Panc1 (cell line): ENCODE measurements at regions of chr20 and their contacts with region 1.

Region 1: GRCh38 chr20:36967636-36968035 is 16.1 kb upstream of the SAMHD1 start:
- DNase-seq: no peak
- ATAC-seq: no peak
- H3K4me3 ChIP-seq: no peak overlapping the region
- H3K27ac ChIP-seq: no peak overlapping the region
- H3K4me1 ChIP-seq: no peaks in the 10 kb centered on the region
- H3K27me3 ChIP-seq: no peaks in the 10 kb centered on the region
- CTCF ChIP-seq: no peak

Region 2: GRCh38 chr20:36830791-36831691 is 136.6 kb before region 1 on chr20:
- CTCF ChIA-PET with region 1: no interaction called
- POLR2A ChIA-PET with region 1: no interaction called
- in situ Hi-C with region 1: no loop called
- intact Hi-C with region 1: no loop called
- DNase-seq: no peak
- ATAC-seq: no peak
- H3K4me3 ChIP-seq: no peak overlapping the region
- H3K27ac ChIP-seq: no peak overlapping the region
- H3K4me1 ChIP-seq: peaks cover 10% of the 10 kb centered on the region
- H3K27me3 ChIP-seq: no peaks in the 10 kb centered on the region
- CTCF ChIP-seq: no peak

Region 3: GRCh38 chr20:36998652-36999051 is 31.0 kb after region 1 on chr20:
- CTCF ChIA-PET with region 1: interaction called, 16 read pairs
- POLR2A ChIA-PET with region 1: no interaction called
- in situ Hi-C with region 1: no loop called
- intact Hi-C with region 1: no loop called
- DNase-seq: no peak
- ATAC-seq: no peak
- H3K4me3 ChIP-seq: no peak overlapping the region
- H3K27ac ChIP-seq: no peak overlapping the region
- H3K4me1 ChIP-seq: no peaks in the 10 kb centered on the region
- H3K27me3 ChIP-seq: no peaks in the 10 kb centered on the region
- CTCF ChIP-seq: no peak